MCF 10A (cell line): ENCODE measurements at regions of chr3 and their contacts with region 1.

Region 1: DNA sequence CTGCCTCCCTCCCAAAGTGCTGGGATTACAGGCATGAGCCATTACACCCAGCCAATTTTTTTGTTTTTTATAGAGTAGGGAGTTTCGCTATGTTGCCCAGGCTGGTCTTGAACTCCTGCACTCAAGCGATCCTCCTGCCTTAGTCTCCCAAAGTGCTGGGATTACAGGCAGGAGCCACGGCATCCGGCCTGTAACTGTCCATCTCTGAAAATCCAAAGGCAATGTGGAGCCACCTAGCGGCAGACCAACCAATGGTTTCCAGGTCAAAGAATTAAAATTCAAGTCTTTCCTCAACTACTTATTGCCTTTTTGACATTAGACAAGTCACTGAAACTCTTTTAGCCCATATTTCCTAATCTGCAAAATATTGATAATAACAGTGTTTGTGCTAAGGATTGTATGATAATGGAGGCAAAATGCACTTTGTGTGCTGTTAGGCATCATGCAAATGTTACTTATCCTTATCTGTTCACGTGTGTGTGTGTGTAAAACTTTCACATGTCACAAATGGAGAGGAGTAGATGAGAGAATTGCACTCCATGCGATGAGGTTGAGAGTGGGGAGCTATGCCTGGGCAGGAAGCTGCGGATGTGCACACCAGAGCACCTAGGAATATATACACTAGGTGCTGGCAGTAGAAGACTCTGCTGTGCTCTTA is 48.7 kb downstream of the COL8A1 start:
- DNase-seq: peak; percentile 76
- H3K4me3 Mint-ChIP-seq: no peak overlapping the region
- H3K27ac Mint-ChIP-seq: peak overlapping the region; percentile 71
- H3K4me1 Mint-ChIP-seq: peaks cover 15% of the 10 kb centered on the region
- H3K27me3 Mint-ChIP-seq: no peaks in the 10 kb centered on the region
- CTCF ChIP-seq: peak; percentile 69

Region 2: DNA sequence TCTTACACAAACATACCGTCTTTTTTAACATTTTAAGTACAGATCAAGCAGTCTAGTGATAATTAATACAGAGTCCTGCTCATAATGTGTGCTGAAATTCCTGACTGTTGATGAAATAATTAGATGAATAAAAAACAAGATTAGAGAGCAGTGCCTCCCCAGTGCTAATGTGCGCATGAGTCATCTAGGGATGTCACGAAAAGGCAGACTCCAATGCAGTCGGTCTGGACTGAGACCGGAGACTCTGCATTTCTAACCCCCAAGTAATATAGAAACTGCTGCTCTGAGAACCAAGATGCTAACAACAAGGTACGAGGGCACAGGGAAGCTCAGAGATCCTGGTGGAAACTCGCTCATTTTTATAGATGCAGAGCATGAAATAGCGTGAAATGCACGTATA is 12.8 kb after region 1 on chr3:
- CTCF ChIA-PET with region 1: interaction called, 17 read pairs
- POLR2A ChIA-PET with region 1: no interaction called
- intact Hi-C with region 1: no loop called
- DNase-seq: peak; percentile 52
- H3K4me3 Mint-ChIP-seq: no peak overlapping the region
- H3K27ac Mint-ChIP-seq: peak overlapping the region; percentile 4
- H3K4me1 Mint-ChIP-seq: peaks cover 34% of the 10 kb centered on the region
- H3K27me3 Mint-ChIP-seq: no peaks in the 10 kb centered on the region
- CTCF ChIP-seq: no peak

Region 3: GRCh38 chr3:99747915-99748314 is 60.8 kb after region 1 on chr3:
- CTCF ChIA-PET with region 1: interaction called, 38 read pairs
- POLR2A ChIA-PET with region 1: no interaction called
- intact Hi-C with region 1: loop called (anchors 1 kb)
- DNase-seq: peak; percentile 49
- H3K4me3 Mint-ChIP-seq: no peak overlapping the region
- H3K27ac Mint-ChIP-seq: no peak overlapping the region
- H3K4me1 Mint-ChIP-seq: peaks cover 14% of the 10 kb centered on the region
- H3K27me3 Mint-ChIP-seq: no peaks in the 10 kb centered on the region
- CTCF ChIP-seq: peak; percentile 39